ENCODE measurements at regions of chr4 and their contacts with region 1.

Region 1: GRCh38 chr4:60034361-60034760 is 1165.8 kb upstream of the ADGRL3 start:
- DNase-seq: no peak
- H3K4me3 ChIP-seq: no peak overlapping the region
- H3K27ac ChIP-seq: no peak overlapping the region
- H3K4me1 ChIP-seq: no peaks in the 10 kb centered on the region
- H3K27me3 ChIP-seq: no peaks in the 10 kb centered on the region
- CTCF ChIP-seq: no peak
- POLR2A ChIP-seq: no peak

Region 2: GRCh38 chr4:60013464-60014184 is 20.7 kb before region 1 on chr4:
- intact Hi-C with region 1: loop called (anchors 2 kb)
- DNase-seq: no peak
- H3K4me3 ChIP-seq: no peak overlapping the region
- H3K27ac ChIP-seq: no peak overlapping the region
- H3K4me1 ChIP-seq: no peaks in the 10 kb centered on the region
- H3K27me3 ChIP-seq: no peaks in the 10 kb centered on the region
- CTCF ChIP-seq: no peak
- POLR2A ChIP-seq: no peak

Measured in breast epithelium (tissue), 4 donors.